ENCODE measurements at regions of chr12 and their contacts with region 1.

Region 1: GRCh38 chr12:54958048-54958658 is 26.4 kb downstream of the TESPA1 start:
- DNase-seq: no peak
- ATAC-seq: peak; percentile 52 to 55
- H3K4me3 ChIP-seq: no peak overlapping the region
- H3K27ac ChIP-seq: no peak overlapping the region
- H3K4me1 ChIP-seq: no peaks in the 10 kb centered on the region
- H3K27me3 ChIP-seq: no peaks in the 10 kb centered on the region

Region 2: GRCh38 chr12:54596526-54596946 is 361.6 kb before region 1 on chr12:
- intact Hi-C with region 1: loop called in 1 of 4 experiments (anchors 5 kb)
- DNase-seq: peak; percentile 65 to 86 (median 79)
- ATAC-seq: peak; percentile 52 to 63
- H3K4me3 ChIP-seq: no peak overlapping the region
- H3K27ac ChIP-seq: no peak overlapping the region
- H3K4me1 ChIP-seq: no peaks in the 10 kb centered on the region
- H3K27me3 ChIP-seq: no peaks in the 10 kb centered on the region

Region 3: GRCh38 chr12:54697851-54698250 is 260.3 kb before region 1 on chr12:
- intact Hi-C with region 1: loop called in 1 of 4 experiments (anchors 5 kb)
- DNase-seq: no peak
- ATAC-seq: no peak
- H3K4me3 ChIP-seq: no peak overlapping the region
- H3K27ac ChIP-seq: no peak overlapping the region
- H3K4me1 ChIP-seq: no peaks in the 10 kb centered on the region
- H3K27me3 ChIP-seq: peaks cover 2% of the 10 kb centered on the region

Region 4: DNA sequence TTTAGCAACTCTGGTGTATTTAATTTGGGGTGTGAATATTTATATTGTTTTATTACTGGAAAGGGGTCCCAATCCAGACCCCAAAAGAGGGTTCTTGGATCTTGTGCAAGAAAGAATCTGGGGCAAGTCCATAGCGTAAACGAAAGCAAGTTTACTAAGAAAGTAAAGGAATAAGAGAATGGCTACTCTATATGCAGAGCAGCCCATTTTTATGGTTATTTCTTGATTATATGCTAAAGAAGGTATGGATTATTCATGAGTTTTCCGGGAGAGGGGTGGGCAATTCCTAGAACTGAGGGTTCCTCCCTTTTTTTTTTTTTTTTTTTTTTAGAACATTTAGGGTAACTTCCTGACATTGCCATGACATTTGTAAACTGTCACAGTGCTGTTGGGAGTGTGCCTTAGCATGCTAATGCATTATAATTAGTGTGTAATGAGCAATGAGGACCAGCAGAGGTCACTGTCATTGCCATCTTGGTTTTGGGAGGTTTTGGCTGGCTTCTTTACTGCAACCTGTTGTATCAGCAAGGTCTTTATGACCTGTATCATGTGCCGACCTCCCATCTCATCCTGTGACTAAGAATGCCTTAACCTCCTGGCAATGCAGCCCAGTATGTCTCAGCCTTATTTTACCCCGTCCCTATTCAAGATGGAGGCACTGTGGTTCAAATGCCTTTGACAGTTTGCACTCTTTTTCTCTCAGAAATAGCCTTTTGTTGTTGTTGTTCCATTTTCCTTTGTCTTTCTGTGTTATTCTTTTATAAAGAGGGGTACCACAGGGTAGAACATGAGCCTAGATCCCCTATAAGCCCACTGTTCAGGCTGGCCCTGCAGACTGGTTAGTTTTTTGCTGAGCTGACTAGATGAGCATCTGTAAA is 234.5 kb before region 1 on chr12:
- intact Hi-C with region 1: loop called in 3 of 4 experiments (anchors 5 to 10 kb)
- DNase-seq: no peak
- ATAC-seq: no peak
- H3K4me3 ChIP-seq: no peak overlapping the region
- H3K27ac ChIP-seq: no peak overlapping the region
- H3K4me1 ChIP-seq: no peaks in the 10 kb centered on the region
- H3K27me3 ChIP-seq: no peaks in the 10 kb centered on the region

Region 5: DNA sequence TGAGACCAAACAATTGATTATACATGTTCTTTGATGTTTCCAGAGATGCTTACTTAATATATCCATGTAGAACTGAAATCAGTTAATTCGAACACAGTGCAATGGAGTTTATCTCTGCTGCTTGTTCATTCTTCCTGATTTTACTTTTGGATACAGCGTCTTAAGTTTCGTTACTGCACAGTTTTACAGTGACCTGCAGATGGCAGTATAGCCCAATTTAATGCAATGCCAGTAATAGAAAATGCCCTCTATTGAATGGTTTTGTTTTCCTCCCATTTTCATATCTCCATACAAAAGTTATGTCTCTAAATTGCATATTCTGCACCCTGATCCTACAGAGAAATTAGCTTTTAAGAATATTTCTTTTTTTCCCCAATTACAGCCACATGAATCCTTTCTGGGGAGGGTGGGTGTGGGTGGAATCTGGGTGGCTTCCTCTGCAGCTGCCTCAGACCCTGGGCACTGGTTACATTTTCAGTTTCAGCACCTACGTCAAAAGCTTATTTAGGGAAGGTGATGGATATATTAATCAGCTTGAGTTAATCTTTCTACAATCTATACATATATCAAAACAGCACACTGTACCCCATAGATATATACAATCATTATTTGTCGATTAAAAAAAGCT is 208.8 kb before region 1 on chr12:
- intact Hi-C with region 1: loop called in 3 of 4 experiments (anchors 2 to 5 kb)
- DNase-seq: no peak
- ATAC-seq: no peak
- H3K4me3 ChIP-seq: no peak overlapping the region
- H3K27ac ChIP-seq: no peak overlapping the region
- H3K4me1 ChIP-seq: no peaks in the 10 kb centered on the region
- H3K27me3 ChIP-seq: no peaks in the 10 kb centered on the region

Region 6: DNA sequence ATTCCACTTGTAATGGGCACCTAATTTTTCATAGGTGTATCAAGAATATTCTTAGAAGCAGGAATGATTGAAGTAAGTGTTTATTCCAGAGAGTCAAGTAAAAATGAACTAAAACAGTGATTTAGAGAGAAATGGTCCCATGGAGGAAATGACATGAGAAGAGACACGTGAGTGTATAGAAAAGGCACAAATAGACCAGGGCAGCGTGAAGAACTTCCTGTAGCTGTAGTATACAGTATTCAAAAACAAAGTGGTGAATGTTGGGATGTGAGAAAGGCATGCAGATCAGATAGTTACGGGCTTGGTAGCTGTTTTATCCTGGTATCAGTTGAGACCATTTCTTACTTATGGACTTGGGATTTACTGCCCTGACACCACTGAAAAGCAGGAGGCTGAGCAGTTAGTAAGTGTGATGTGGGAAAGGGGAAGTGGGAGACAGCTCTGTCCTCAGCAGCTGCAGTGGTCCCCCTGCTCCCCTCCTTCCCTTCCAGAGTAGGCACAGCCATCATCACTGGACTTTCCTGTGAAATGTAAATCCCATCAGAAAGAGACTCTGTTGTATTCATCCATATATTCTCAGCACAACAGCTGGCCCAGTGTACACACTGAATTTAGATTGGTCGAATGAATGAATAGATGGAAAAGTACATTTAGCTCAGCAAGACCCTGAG is 43.2 kb after region 1 on chr12:
- intact Hi-C with region 1: no loop called
- DNase-seq: no peak
- ATAC-seq: no peak
- H3K4me3 ChIP-seq: no peak overlapping the region
- H3K27ac ChIP-seq: no peak overlapping the region
- H3K4me1 ChIP-seq: no peaks in the 10 kb centered on the region
- H3K27me3 ChIP-seq: no peaks in the 10 kb centered on the region